ENCODE measurements at regions of chr22 and their contacts with region 1.

Region 1: GRCh38 chr22:36762687-36763260 is 13.1 kb downstream of the IFT27 start:
- DNase-seq: peak in 3 of 5 donors; percentile 25 to 67 (median 37)
- H3K4me3 ChIP-seq: no peak overlapping the region
- H3K27ac ChIP-seq: no peak overlapping the region
- H3K4me1 ChIP-seq: peaks cover 4% of the 10 kb centered on the region
- H3K27me3 ChIP-seq: no peaks in the 10 kb centered on the region
- CTCF ChIP-seq: no peak
- EP300 ChIP-seq: no peak
- POLR2A ChIP-seq: no peak

Region 2: GRCh38 chr22:36546092-36546804 is 216.5 kb before region 1 on chr22:
- intact Hi-C with region 1: loop called in 1 of 4 experiments (anchors 10 kb)
- DNase-seq: no peak
- H3K4me3 ChIP-seq: no peak overlapping the region
- H3K27ac ChIP-seq: no peak overlapping the region
- H3K4me1 ChIP-seq: no peaks in the 10 kb centered on the region
- H3K27me3 ChIP-seq: no peaks in the 10 kb centered on the region
- CTCF ChIP-seq: no peak
- EP300 ChIP-seq: no peak
- POLR2A ChIP-seq: no peak

Region 3: DNA sequence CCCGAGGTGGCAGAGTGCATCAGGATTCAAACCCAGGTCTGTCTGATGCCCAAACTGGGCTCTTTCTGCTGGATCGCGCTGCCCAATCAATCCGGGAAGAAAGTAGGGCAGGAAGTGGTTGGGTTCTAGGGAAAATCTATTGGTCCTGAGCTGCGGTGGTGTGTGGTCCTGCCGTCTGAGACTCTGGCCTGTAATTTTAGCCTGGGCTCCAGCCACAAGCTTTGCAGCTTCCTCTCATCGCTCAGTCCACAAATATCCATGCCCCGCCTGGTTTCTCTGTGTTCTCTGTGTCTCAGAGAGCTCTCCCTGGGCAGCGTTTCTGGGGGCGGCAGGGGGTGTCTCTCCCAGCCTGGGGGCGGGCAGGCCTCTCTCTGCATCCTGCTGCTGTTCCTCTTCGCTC is 77.9 kb before region 1 on chr22:
- intact Hi-C with region 1: no loop called
- DNase-seq: no peak
- H3K4me3 ChIP-seq: no peak overlapping the region
- H3K27ac ChIP-seq: no peak overlapping the region
- H3K4me1 ChIP-seq: no peaks in the 10 kb centered on the region
- H3K27me3 ChIP-seq: no peaks in the 10 kb centered on the region
- CTCF ChIP-seq: no peak
- EP300 ChIP-seq: no peak
- POLR2A ChIP-seq: no peak

Region 4: DNA sequence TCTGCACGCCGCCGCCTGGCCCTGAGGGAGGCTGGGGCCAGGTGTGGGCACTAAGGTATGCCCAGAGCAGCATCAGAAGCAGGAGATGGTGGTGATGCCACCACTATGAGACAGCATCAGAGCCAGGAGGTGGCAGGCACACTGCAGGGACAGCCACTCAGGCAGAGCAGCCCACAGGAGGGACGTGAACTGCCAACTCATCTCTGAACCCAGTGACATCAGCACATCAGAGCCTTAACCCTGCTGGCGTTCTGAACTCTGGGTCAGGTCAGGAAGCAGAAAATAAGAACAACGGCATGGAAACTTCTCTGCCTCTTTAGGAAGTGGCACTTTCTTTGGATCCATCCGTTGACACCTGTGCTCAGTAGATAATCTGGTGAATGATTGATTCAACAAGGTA is 27.9 kb after region 1 on chr22:
- intact Hi-C with region 1: loop called in 1 of 4 experiments (anchors 1 kb)
- DNase-seq: no peak
- H3K4me3 ChIP-seq: no peak overlapping the region
- H3K27ac ChIP-seq: no peak overlapping the region
- H3K4me1 ChIP-seq: no peaks in the 10 kb centered on the region
- H3K27me3 ChIP-seq: no peaks in the 10 kb centered on the region
- CTCF ChIP-seq: no peak
- EP300 ChIP-seq: no peak
- POLR2A ChIP-seq: no peak

Region 5: GRCh38 chr22:36884349-36885117 is 121.8 kb after region 1 on chr22:
- intact Hi-C with region 1: no loop called
- DNase-seq: no peak
- H3K4me3 ChIP-seq: no peak overlapping the region
- H3K27ac ChIP-seq: no peak overlapping the region
- H3K4me1 ChIP-seq: no peaks in the 10 kb centered on the region
- H3K27me3 ChIP-seq: no peaks in the 10 kb centered on the region
- CTCF ChIP-seq: no peak
- EP300 ChIP-seq: no peak
- POLR2A ChIP-seq: no peak